ENCODE measurements at regions of chr7 and their contacts with region 1.

Region 1: GRCh38 chr7:135012229-135012628 is 25.9 kb downstream of the AGBL3 start:
- DNase-seq: no peak
- ATAC-seq: no peak
- H3K4me3 ChIP-seq: no peak overlapping the region
- H3K4me1 ChIP-seq: no peaks in the 10 kb centered on the region
- CTCF ChIP-seq: no peak

Region 2: GRCh38 chr7:134954197-134955082 is 57.8 kb before region 1 on chr7:
- intact Hi-C with region 1: no loop called
- DNase-seq: no peak
- ATAC-seq: no peak
- H3K4me3 ChIP-seq: no peak overlapping the region
- H3K4me1 ChIP-seq: no peaks in the 10 kb centered on the region
- CTCF ChIP-seq: peak; percentile 15

Region 3: GRCh38 chr7:135143885-135144668 is 131.8 kb after region 1 on chr7:
- intact Hi-C with region 1: loop called in 1 of 2 experiments (anchors 10 kb)
- DNase-seq: no peak
- ATAC-seq: no peak
- H3K4me3 ChIP-seq: no peak overlapping the region
- H3K4me1 ChIP-seq: no peaks in the 10 kb centered on the region
- CTCF ChIP-seq: no peak

Measured in mucosa of descending colon (tissue), 3 donors.